ENCODE measurements at regions of chr12 and their contacts with region 1.

Region 1: GRCh38 chr12:56189176-56189917 is at the start of gene SMARCC2:
- DNase-seq: peak; percentile 92
- ATAC-seq: peak; percentile 81
- H3K4me3 Mint-ChIP-seq: peak within 1 kb of the TSS; percentile 99
- H3K27ac Mint-ChIP-seq: peak within 1 kb of the TSS; percentile 96
- H3K4me1 Mint-ChIP-seq: peaks cover 30% of the 10 kb centered on the region
- H3K27me3 Mint-ChIP-seq: peaks cover 3% of the 10 kb centered on the region; the same call in 1 of the 2 replicates
- CTCF ChIP-seq: no peak; the same call in 1 of the 2 replicates
- total RNA-seq, gene SMARCC2: 72.8 to 77.9 TPM (median 76.8 TPM) in 3 replicates

Region 2: GRCh38 chr12:56117778-56118687 is 71.3 kb before region 1 on chr12 and contains the start of gene ZC3H10:
- CTCF ChIA-PET with region 1: interaction called, 95 read pairs
- POLR2A ChIA-PET with region 1: interaction called, 12 read pairs
- DNase-seq: peak; percentile 98
- ATAC-seq: peak; percentile 75
- H3K4me3 Mint-ChIP-seq: peak within 1 kb of the TSS; percentile 100
- H3K27ac Mint-ChIP-seq: peak within 1 kb of the TSS; percentile 100
- H3K4me1 Mint-ChIP-seq: peaks cover 21% of the 10 kb centered on the region
- H3K27me3 Mint-ChIP-seq: no peaks in the 10 kb centered on the region
- CTCF ChIP-seq: no peak
- total RNA-seq, gene ZC3H10: 11.3 to 13.6 TPM (median 13.1 TPM) in 3 replicates

Region 3: GRCh38 chr12:56158029-56158925 is 31.1 kb before region 1 on chr12 and contains the start of gene MYL6:
- CTCF ChIA-PET with region 1: interaction called, 21 read pairs
- POLR2A ChIA-PET with region 1: interaction called, 25 read pairs
- DNase-seq: peak; percentile 93
- ATAC-seq: peak; percentile 65
- H3K4me3 Mint-ChIP-seq: peak within 1 kb of the TSS; percentile 96
- H3K27ac Mint-ChIP-seq: peak within 1 kb of the TSS; percentile 99
- H3K4me1 Mint-ChIP-seq: peaks cover 49% of the 10 kb centered on the region
- H3K27me3 Mint-ChIP-seq: no peaks in the 10 kb centered on the region
- CTCF ChIP-seq: no peak; the same call in 1 of the 2 replicates
- total RNA-seq, gene MYL6: 835 to 932 TPM (median 844 TPM) in 3 replicates

Region 4: DNA sequence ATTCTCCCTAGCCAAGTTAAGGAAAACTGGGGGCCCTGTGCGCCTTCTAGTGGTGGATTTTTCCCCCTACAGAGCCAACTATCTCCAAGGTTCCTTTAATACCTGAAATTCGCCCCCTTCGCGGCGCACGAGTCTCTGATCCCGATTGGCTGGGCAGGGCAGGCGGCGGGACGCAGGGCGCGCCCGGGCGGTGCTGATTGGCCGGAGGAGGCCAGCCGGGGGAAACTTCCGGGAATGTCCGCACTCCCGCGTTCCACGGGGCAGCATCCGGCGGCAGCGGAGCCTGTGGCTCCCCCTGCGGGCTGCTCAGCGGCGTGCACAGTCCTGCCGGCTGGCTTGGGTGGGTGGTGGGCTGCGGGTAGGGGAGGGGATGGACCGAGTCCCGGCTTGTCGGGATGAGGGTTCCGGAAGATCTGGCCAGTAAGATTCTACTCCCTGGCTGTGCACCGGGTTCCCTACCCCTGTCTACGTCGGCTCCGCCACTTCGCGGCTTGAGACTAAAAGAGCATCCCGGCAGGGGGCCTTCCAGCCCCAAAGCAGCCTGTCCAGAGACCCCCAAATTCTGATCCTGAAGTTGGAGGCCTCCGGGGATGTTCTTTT is 34.9 kb after region 1 on chr12 and contains the start of gene NABP2:
- CTCF ChIA-PET with region 1: interaction called, 88 read pairs
- POLR2A ChIA-PET with region 1: interaction called, 30 read pairs
- DNase-seq: peak; percentile 99
- ATAC-seq: peak; percentile 78
- H3K4me3 Mint-ChIP-seq: peak within 1 kb of the TSS; percentile 98
- H3K27ac Mint-ChIP-seq: peak within 1 kb of the TSS; percentile 97
- H3K4me1 Mint-ChIP-seq: peaks cover 33% of the 10 kb centered on the region
- H3K27me3 Mint-ChIP-seq: no peaks in the 10 kb centered on the region
- CTCF ChIP-seq: peak; percentile 54; the same call in 1 of the 2 replicates
- total RNA-seq, gene NABP2: 42.7 to 47.9 TPM (median 47.5 TPM) in 3 replicates

Region 5: DNA sequence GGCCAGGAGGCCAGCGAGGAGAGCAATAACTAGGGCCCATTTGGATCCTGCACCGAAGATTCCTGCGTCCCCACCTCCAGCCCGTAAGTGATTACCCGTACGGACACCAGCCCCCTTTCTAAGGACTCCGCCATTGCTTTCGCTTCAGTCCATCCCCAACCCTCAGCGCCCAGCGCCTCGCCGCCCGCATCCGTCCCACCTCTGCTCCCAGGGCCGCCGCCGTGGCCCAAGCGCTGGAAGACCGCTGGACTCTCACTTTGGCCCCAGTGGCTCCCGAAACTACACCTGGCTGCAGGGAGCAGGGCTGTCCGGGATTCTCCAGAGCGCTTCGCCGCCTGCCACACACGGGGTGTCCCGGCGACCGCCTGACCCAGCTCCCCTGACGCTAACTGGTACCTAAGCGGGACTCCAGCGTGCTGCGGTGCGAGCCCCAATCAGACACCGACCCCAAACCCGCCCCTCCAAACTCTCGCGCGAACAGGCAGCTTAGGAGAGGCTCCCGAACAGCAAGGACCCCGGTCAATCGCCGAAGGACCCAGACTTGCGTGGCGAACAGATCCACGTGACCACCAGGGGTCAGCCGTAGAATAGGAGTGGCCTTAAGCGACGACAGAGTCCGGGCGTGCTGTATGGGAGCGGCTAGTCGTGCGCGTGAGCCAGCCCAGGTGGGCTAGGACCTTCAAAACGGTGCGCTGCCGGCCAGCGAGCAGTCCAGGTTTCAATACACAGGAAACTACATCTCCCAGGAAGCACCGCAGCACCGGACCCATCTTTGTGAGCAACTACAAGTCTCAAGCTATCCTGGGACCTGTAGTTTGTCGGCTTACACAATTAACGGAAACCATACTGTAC is 126.5 kb after region 1 on chr12 and contains the start of gene CNPY2:
- CTCF ChIA-PET with region 1: interaction called, 11 read pairs
- POLR2A ChIA-PET with region 1: interaction called, 4 read pairs
- DNase-seq: peak; percentile 97
- ATAC-seq: peak; percentile 94
- H3K4me3 Mint-ChIP-seq: peak within 1 kb of the TSS; percentile 98
- H3K27ac Mint-ChIP-seq: peak within 1 kb of the TSS; percentile 99
- H3K4me1 Mint-ChIP-seq: peaks cover 8% of the 10 kb centered on the region
- H3K27me3 Mint-ChIP-seq: no peaks in the 10 kb centered on the region
- CTCF ChIP-seq: no peak
- total RNA-seq, gene CNPY2: 171 to 193 TPM (median 192 TPM) in 3 replicates

Measured in WTC11 (cell line).